BJ (cell line): ENCODE measurements at regions of chr4 and their contacts with region 1.

Region 1: DNA sequence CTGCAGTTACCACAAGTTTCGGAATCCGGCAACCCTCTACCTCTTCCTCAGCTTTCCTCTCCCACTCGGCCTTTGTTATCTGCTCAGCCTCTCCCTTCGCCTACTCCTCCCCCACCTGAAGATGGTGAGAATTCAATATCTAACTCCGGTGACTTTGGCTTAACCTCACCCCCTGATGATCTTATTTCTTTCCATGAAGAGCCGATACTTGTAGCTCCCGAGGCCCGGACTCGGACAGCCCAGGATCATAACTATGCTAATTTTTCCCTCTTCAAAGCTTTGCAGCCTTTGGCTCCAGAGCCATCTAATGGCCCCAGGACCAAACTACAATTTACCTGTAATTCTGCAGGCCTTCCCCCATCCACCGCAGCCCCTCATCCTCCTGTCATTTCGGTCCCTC is 32.0 kb upstream of the MGST2 start:
- DNase-seq: no peak
- H3K4me3 ChIP-seq: no peak overlapping the region
- H3K27me3 ChIP-seq: peaks cover 7% of the 10 kb centered on the region
- CTCF ChIP-seq: peak; percentile 33; the same call in 1 of the 2 replicates

Region 2: DNA sequence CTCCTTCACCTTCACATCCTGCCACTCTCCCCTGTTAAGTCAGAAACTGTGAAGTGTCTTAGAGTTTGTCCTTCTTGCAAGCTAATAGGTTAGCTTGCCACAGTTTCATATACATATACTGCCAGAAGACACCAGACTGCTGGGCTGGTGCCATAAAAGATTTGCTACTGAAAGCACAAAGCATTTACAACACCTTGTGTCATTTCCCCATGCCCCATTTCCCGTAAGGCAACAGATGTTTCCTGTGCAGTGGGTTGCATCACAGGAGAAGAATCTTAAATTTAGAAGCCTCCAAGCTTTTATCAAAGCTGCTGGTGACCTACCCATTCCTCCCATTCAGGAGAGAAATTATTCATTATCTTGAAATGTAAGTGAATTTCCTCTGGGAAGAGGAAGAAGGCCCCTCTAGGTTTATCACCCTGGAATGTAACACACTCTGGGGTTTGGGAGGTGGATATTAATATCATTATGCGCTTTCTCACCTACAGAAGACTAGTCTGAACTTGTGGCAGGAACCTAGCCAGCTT is 214.2 kb before region 1 on chr4:
- CTCF ChIA-PET with region 1: interaction called, 3 read pairs
- POLR2A ChIA-PET with region 1: interaction called, 11 read pairs
- DNase-seq: peak; percentile 43
- H3K4me3 ChIP-seq: no peak overlapping the region
- H3K27me3 ChIP-seq: no peaks in the 10 kb centered on the region
- CTCF ChIP-seq: no peak

Region 3: DNA sequence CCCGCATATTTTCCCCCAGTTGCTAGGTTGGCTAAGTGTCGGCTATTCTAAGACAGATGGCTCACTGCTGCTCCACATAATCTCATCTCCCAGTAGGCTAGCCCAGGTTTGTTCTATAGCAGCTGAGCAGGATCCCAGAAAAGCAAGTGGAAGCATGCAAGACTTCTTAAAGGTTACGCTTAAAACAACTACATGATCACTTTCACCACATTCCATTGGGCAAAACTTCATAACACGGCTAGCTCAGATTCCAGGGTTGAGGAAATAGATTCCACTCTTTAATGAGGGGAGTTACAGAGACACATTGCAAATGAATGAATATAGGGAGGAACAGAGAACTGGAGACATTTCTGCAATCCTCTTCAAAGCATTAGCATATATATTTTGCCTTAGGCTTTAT is 192.6 kb before region 1 on chr4:
- CTCF ChIA-PET with region 1: no interaction called
- POLR2A ChIA-PET with region 1: no interaction called
- DNase-seq: no peak
- H3K4me3 ChIP-seq: no peak overlapping the region
- H3K27me3 ChIP-seq: no peaks in the 10 kb centered on the region
- CTCF ChIP-seq: no peak

Region 4: DNA sequence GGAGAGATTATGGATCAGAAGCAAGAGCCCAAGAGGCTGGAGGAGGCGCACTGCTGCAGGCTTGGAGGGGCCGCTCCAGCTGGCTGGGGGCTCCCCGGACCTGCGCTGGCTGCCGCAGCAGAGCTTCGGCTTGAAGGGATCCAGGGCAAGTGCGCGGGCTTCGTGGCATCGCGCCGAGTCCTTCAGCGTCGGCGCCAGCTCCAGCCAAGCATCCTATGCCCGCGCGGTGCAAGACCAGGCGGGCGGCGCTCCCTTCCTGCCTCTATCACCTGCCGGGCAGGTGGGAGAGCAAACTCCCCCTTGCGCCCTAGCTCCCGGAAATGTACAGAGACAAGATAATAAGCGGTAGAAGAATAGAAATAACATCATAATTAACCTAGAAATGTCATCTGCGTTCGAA is 945.6 kb after region 1 on chr4:
- CTCF ChIA-PET with region 1: no interaction called
- POLR2A ChIA-PET with region 1: no interaction called
- DNase-seq: no peak
- H3K4me3 ChIP-seq: no peak overlapping the region
- H3K27me3 ChIP-seq: peaks cover 12% of the 10 kb centered on the region; the same call in 1 of the 2 replicates
- CTCF ChIP-seq: no peak